ENCODE measurements at regions of chr4 and their contacts with region 1.

Region 1: GRCh38 chr4:1130316-1131186 is 17.2 kb upstream of the RNF212 start:
- DNase-seq: peak; percentile 83 to 88 (median 86)
- ATAC-seq: peak; percentile 100
- H3K4me3 ChIP-seq: no peak overlapping the region
- H3K27ac ChIP-seq: no peak overlapping the region
- H3K4me1 ChIP-seq: no peaks in the 10 kb centered on the region; a peak in 1 of 5 replicates
- H3K27me3 ChIP-seq: peaks cover 16 to 25% of the 10 kb centered on the region in 2 experiments; a peak in 4 of 5 replicates
- CTCF ChIP-seq: peak; percentile 95 to 99 (median 98)
- EP300 ChIP-seq: no peak
- POLR2A ChIP-seq: no peak
- RAD21 ChIP-seq: peak; percentile 89 to 96

Region 2: GRCh38 chr4:948051-948935 is 182.3 kb before region 1 on chr4:
- CTCF ChIA-PET with region 1: no interaction called
- POLR2A ChIA-PET with region 1: no interaction called
- in situ Hi-C with region 1: no loop called
- intact Hi-C with region 1: no loop called
- DNase-seq: no peak
- ATAC-seq: no peak; the same call in 2 of the 3 replicates
- H3K4me3 ChIP-seq: no peak overlapping the region
- H3K27ac ChIP-seq: no peak overlapping the region
- H3K4me1 ChIP-seq: peaks cover 0 to 48% of the 10 kb centered on the region in 2 experiments; a peak in 2 of 5 replicates
- H3K27me3 ChIP-seq: no peaks in the 10 kb centered on the region
- CTCF ChIP-seq: no peak
- EP300 ChIP-seq: no peak
- POLR2A ChIP-seq: no peak
- RAD21 ChIP-seq: no peak

Region 3: DNA sequence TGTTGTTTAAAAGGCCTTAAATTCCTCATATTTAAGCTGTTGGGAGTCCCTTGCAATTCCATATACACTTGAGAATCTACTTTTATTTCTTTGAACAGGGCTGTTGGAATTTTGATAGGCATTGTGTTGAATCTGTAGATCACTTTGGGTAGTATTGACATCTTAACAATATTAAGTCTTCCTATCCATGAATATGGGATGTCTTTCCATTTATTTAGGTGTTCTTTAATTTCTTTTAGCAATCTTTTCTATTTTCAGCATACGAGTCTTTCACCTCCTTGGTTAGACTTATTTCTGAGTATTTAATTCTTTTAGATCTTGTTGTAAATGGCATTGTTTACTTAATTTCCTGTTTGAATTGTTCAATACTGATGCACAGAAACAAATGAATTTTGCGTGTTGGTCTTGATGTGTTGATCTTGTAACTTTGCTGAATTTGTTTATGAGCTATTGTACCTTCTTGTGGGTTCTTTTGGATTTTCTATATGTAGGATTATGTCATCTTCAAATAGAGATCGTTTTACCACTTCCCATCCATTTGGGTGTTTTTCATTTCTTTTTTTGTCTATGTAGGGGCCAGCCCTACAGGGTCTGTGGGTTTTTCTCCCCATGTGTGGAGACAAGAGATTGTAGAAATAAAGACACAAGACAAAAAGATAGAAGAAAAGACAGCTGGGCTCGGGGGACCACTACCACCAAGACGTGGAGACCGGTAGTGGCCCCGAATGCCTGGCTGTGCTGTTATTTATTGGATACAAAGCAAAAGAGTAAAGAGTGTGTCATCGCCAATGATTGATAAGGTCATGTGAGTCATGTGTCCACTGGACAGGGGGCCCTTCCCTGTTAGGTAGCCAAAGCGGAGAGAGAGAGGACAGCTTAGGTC is 136.6 kb after region 1 on chr4:
- CTCF ChIA-PET with region 1: interaction called, 8 read pairs
- POLR2A ChIA-PET with region 1: no interaction called
- in situ Hi-C with region 1: no loop called
- intact Hi-C with region 1: loop called (anchors 1 kb)
- DNase-seq: no peak
- ATAC-seq: no peak
- H3K4me3 ChIP-seq: no peak overlapping the region
- H3K27ac ChIP-seq: no peak overlapping the region
- H3K4me1 ChIP-seq: no peaks in the 10 kb centered on the region
- H3K27me3 ChIP-seq: peaks cover 3 to 10% of the 10 kb centered on the region in 2 experiments; a peak in 3 of 5 replicates
- CTCF ChIP-seq: no peak
- EP300 ChIP-seq: no peak
- POLR2A ChIP-seq: no peak
- RAD21 ChIP-seq: no peak

Region 4: DNA sequence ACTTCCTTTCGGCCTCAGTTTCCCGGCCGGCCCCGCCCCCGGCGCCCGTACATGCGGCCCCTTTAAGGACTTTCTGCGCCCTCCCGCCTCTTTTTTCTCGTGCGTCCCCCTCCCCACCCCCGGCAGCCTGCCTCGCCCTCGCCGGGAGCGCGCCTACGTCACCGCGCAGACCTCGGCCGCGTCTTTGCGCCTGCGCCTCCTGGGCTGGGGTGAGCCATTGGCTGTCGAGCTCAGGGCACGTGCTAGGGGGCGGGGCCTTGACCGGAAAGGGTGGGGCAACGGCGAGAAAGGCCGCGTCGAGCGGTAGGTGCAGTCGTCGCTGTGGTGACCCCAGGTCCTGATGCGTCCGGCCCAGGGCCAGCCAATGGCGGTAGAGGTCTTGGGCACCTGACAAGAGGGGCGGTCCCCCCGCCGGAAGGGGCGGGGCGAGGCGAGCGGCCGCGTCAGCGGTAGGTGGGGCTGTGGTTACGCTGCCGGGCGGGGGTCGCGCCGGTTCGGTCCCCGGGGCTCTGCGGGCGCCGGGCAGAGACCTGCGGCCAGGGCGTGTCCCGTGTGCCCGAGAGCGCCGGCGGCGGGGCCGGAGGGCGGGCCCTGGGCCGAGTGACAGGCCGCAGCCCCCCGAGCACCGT is 216.3 kb after region 1 on chr4 and contains the start of gene UVSSA:
- CTCF ChIA-PET with region 1: interaction called, 11 read pairs
- POLR2A ChIA-PET with region 1: no interaction called
- in situ Hi-C with region 1: loop called (anchors 5 kb)
- intact Hi-C with region 1: loop called (anchors 1 kb)
- DNase-seq: peak; percentile 98 to 100 (median 99)
- ATAC-seq: peak; percentile 95
- H3K4me3 ChIP-seq: peak within 1 kb of the TSS; percentile 95
- H3K27ac ChIP-seq: peak within 1 kb of the TSS; percentile 95
- H3K4me1 ChIP-seq: peaks cover 10 to 55% of the 10 kb centered on the region in 2 experiments
- H3K27me3 ChIP-seq: no peaks in the 10 kb centered on the region
- CTCF ChIP-seq: no peak
- EP300 ChIP-seq: no peak
- POLR2A ChIP-seq: peak; percentile 39; the same call in 1 of the 2 replicates
- RAD21 ChIP-seq: no peak
- polyA plus RNA-seq, gene UVSSA: 0.21 to 0.27 TPM

Region 5: GRCh38 chr4:1628892-1629698 is 498.5 kb after region 1 on chr4:
- CTCF ChIA-PET with region 1: no interaction called
- POLR2A ChIA-PET with region 1: no interaction called
- in situ Hi-C with region 1: loop called (anchors 10 kb)
- intact Hi-C with region 1: no loop called
- DNase-seq: peak; percentile 72 to 88 (median 83)
- ATAC-seq: peak; percentile 96
- H3K4me3 ChIP-seq: no peak overlapping the region
- H3K27ac ChIP-seq: no peak overlapping the region
- H3K4me1 ChIP-seq: peaks cover 12 to 36% of the 10 kb centered on the region in 2 experiments; a peak in 4 of 5 replicates
- H3K27me3 ChIP-seq: peaks cover 0 to 5% of the 10 kb centered on the region in 2 experiments; a peak in 1 of 5 replicates
- CTCF ChIP-seq: peak; percentile 88 to 94 (median 91)
- EP300 ChIP-seq: no peak
- POLR2A ChIP-seq: no peak
- RAD21 ChIP-seq: peak; percentile 73 to 87

Measured in K562 (cell line).